ENCODE measurements at regions of chr12 and their contacts with region 1.

Region 1: DNA sequence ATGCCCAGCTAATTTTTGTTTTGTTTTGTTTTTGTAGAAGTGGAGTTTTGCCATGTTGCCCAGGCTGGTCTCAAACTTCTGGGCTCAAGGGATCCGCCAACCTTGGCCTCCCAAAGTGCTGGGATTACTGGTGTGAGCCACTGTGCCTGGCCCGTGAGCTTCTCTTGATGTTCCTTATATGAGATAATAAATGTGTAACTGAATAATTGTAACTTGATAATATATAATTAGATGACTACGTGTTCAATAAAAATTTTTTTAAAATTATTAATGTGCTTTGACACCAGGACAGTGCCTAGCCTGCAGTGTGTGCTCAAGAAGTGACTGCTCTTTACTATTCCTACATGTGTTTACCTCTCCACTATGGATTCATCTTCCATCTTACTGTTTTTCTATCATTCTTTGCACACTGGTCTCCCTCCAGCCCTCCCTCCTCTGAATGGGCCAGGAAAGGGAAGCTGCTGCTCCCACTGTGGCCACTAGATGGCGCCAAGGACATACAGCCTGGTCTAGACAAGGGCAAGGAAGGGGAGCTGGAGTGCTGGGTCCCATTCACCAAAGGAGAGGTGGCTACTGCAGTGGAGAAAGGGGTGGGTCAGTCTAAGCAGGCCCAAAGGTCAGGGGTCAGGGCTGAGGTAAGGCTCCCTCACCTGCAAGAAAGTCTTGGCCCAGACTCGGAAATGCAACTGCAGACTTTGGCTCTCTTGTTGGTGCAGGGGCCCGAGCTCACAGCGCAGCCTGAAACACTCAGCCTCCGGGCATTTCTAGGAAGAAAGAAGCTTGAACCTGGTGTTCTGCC is 14.7 kb upstream of the ZNF385A start:
- H3K4me3 ChIP-seq: no peak overlapping the region
- H3K27ac ChIP-seq: no peak overlapping the region
- H3K4me1 ChIP-seq: no peaks in the 10 kb centered on the region
- CTCF ChIP-seq: peak; percentile 96

Region 2: GRCh38 chr12:54232790-54233189 is 166.4 kb before region 1 on chr12:
- CTCF ChIA-PET with region 1: no interaction called
- POLR2A ChIA-PET with region 1: no interaction called
- H3K4me3 ChIP-seq: no peak overlapping the region
- H3K27ac ChIP-seq: no peak overlapping the region
- H3K4me1 ChIP-seq: no peaks in the 10 kb centered on the region; the same call in 1 of the 2 replicates
- CTCF ChIP-seq: no peak

Region 3: DNA sequence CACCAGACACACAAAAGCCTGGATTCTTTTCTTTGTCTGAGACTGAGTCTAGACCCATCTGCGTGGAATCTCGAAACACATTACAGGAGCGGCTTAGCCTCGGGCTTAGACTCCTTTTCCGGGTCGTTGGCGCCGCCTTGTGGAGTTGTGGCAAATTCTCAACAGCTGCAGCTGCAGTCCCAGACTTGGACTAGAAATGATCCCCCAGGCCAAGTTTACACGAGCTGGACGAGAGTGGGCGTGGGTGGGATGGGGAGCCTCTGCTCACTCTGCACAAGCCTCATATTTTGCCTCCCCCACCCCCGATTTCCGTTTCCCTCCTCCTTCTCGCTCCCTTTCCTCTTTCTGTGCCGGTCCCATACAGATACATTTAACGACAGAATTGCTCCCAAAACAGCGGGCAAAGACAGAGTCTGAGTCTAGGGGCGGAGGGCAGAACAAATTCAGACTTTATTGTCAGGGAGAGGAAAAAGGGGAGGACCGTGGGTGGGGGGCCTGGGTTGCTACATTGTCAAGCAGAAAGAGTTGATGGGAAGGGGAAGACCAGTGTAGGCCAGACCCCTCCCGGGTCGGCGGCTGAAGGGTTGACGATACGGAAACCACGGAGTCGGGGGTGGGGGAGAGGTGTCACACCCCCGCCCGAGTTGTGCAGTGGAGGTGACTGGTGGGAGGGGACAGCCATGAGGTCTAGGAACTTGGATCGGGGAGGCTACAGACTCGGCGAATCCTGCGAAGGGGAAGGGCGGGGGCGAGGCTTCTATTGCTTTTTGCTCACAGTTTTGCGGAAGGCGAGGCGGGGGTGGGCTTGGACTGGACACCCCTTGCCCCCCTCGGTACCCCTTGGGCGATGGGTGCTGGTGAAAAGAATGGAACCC is 30.2 kb before region 1 on chr12:
- CTCF ChIA-PET with region 1: interaction called, 10 read pairs
- POLR2A ChIA-PET with region 1: no interaction called
- H3K4me3 ChIP-seq: no peak overlapping the region
- H3K27ac ChIP-seq: no peak overlapping the region
- H3K4me1 ChIP-seq: peaks cover 10% of the 10 kb centered on the region
- CTCF ChIP-seq: peak; percentile 79

Region 4: GRCh38 chr12:54419088-54419892 is 20.1 kb after region 1 on chr12 and contains the start of gene ITGA5:
- CTCF ChIA-PET with region 1: interaction called, 924 read pairs
- POLR2A ChIA-PET with region 1: interaction called, 11 read pairs
- H3K4me3 ChIP-seq: peak within 1 kb of the TSS; percentile 74
- H3K27ac ChIP-seq: peak within 1 kb of the TSS; percentile 78; the same call in 1 of the 2 replicates
- H3K4me1 ChIP-seq: peaks cover 11% of the 10 kb centered on the region
- CTCF ChIP-seq: no peak

Region 5: GRCh38 chr12:54463034-54463433 is 63.8 kb after region 1 on chr12:
- CTCF ChIA-PET with region 1: interaction called, 18 read pairs
- POLR2A ChIA-PET with region 1: no interaction called
- H3K4me3 ChIP-seq: no peak overlapping the region
- H3K27ac ChIP-seq: no peak overlapping the region
- H3K4me1 ChIP-seq: peaks cover 31% of the 10 kb centered on the region
- CTCF ChIP-seq: no peak

Region 6: DNA sequence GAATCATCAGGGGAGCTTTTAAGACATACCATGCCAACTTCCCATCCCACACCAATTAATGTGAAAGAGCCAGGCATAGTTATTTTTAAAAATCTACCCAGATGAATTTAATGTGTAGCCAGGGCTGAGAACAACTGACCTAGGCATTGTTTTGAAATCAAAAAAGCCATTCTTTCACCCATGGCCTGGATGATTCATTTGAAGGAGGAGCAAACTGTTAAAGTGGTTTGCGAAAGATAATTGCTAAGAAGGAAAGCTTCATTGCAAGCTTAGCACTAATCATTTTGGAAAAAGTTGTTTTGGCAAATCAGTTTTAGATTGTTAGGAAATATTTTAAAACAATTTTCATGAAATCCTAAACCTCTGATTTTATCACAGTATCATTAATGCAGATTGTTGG is 76.3 kb after region 1 on chr12:
- CTCF ChIA-PET with region 1: interaction called, 10 read pairs
- POLR2A ChIA-PET with region 1: no interaction called
- H3K4me3 ChIP-seq: no peak overlapping the region
- H3K27ac ChIP-seq: no peak overlapping the region
- H3K4me1 ChIP-seq: 0 out of 2 replicates have a peak, but pooled peaks cover 3% of the 10 kb centered on the region
- CTCF ChIP-seq: no peak

Measured in HEK293 (cell line).